Heart left ventricle (tissue), 16 donors: ENCODE measurements at regions of chr6 and their contacts with region 1.

Region 1: GRCh38 chr6:133512410-133513016 is 271.4 kb downstream of the EYA4 start:
- DNase-seq: peak in 2 of 5 donors; percentile 33 to 35
- ATAC-seq: no peak
- H3K4me3 ChIP-seq: no peak overlapping the region
- H3K27ac ChIP-seq: no peak overlapping the region
- H3K4me1 ChIP-seq: no peaks in the 10 kb centered on the region
- H3K27me3 ChIP-seq: peaks cover 0 to 2% (median 0%) of the 10 kb centered on the region in 9 donors
- CTCF ChIP-seq: peak; percentile 17 to 70 (median 58)
- POLR2A ChIP-seq: no peak

Region 2: DNA sequence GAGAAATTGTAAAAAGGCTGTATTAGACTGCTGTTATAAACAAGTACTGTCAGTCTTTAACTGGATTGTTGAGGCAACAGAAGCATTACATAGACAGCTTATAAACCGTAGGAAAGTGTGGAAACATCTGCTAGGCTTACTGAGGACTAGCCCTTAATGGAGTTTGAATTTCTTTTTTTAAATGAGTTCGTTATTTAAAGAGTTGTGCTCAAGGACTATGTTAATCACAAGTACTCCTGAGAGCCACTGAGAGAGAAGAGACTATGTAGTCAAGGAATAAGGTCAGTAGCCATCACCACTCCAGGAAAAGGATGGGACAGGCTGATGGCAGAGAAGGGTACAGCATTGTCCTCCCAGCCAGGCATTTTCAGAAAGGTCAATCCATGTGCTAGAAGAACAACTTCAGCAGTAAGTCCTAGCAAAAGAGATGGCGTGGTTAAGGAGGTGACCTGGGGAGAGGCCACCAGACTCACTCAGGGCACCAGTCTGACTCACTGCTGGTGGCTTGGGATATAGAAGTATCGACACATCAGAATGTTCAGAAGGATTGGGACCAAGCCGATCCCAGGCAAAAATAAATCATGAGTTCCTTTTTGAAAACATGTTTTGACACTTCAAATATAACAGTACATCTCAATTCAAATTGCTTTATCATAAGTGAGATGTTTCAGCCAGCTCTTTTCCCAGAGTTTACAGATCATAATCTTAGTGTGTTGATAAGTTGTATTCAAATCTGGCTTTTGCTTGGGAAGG is 691.7 kb before region 1 on chr6:
- intact Hi-C with region 1: loop called in 2 of 10 experiments (anchors 10 kb)
- DNase-seq: no peak
- ATAC-seq: peak in 2 of 4 donors; percentile 35 to 54
- H3K4me3 ChIP-seq: no peak overlapping the region
- H3K27ac ChIP-seq: peak overlapping the region in 2 of 12 donors; percentile 10 to 40
- H3K4me1 ChIP-seq: peaks cover 0 to 28% (median 18%) of the 10 kb centered on the region in 12 donors
- H3K27me3 ChIP-seq: no peaks in the 10 kb centered on the region
- CTCF ChIP-seq: no peak
- POLR2A ChIP-seq: no peak

Region 3: GRCh38 chr6:132830334-132830751 is 682.2 kb before region 1 on chr6:
- intact Hi-C with region 1: loop called in 4 of 10 experiments (anchors 2 to 10 kb)
- DNase-seq: no peak
- ATAC-seq: no peak
- H3K4me3 ChIP-seq: no peak overlapping the region
- H3K27ac ChIP-seq: no peak overlapping the region
- H3K4me1 ChIP-seq: no peaks in the 10 kb centered on the region
- H3K27me3 ChIP-seq: no peaks in the 10 kb centered on the region
- CTCF ChIP-seq: peak in 10 of 12 donors; percentile 20 to 59 (median 48)
- POLR2A ChIP-seq: no peak

Region 4: DNA sequence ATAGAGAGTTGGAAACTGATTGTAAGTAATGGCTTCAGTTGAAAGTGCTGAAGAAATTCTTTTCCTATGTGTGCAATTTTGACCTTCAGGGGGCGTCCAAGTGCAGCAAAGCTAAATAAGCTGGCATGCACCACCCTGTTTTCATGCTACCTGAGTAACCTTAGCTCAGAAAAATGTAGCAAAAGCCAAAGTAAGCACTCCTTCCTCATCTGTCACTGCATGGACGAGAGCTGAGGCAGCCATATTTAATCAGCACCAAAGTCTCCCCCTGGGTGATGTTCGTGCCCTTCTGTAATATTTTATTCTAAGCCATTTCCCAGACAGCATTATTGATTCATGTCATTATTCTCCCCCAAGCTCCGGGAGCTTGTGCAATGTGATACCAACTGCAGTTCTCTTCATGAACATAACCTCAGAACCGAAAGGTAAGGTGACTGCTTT is 575.0 kb before region 1 on chr6:
- intact Hi-C with region 1: loop called in 3 of 10 experiments (anchors 10 kb)
- DNase-seq: peak in 2 of 5 donors; percentile 22 to 36
- ATAC-seq: peak in 1 of 4 donors; percentile 16
- H3K4me3 ChIP-seq: no peak overlapping the region
- H3K27ac ChIP-seq: no peak overlapping the region
- H3K4me1 ChIP-seq: no peaks in the 10 kb centered on the region
- H3K27me3 ChIP-seq: peaks cover 0 to 4% (median 0%) of the 10 kb centered on the region in 9 donors
- CTCF ChIP-seq: peak in 11 of 12 donors; percentile 15 to 55 (median 40)
- POLR2A ChIP-seq: no peak

Region 5: DNA sequence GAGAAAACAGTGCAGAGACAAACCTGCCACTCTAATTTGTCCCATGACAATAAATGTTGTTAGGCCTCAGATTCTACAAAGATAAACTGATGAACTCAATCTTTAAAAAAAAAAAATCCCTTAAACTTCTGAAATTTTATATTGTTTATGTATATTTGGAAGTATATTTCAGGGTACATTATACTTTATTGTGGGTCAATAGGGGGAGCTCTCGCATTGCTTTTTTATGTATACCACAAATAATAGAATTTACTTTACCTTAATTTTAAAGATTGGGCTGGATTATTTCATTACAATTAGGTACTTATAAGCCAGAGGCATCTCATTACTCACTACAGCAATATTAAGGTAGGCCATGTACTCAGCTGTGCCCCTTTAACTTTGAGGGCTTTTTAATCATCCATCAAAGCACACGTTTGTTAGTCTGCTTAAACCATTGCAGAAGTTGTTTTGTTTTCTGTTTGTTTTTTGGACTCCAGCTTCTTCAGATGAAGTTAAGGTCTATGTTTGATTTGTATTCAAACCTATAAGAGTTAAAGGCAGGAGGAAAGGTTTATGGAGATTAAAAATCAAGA is 327.6 kb before region 1 on chr6:
- intact Hi-C with region 1: loop called (anchors 5 to 10 kb)
- DNase-seq: no peak
- ATAC-seq: no peak
- H3K4me3 ChIP-seq: no peak overlapping the region
- H3K27ac ChIP-seq: no peak overlapping the region
- H3K4me1 ChIP-seq: no peaks in the 10 kb centered on the region
- H3K27me3 ChIP-seq: no peaks in the 10 kb centered on the region
- CTCF ChIP-seq: peak; percentile 25 to 67 (median 52)
- POLR2A ChIP-seq: no peak

Region 6: GRCh38 chr6:133191323-133191722 is 321.2 kb before region 1 on chr6:
- intact Hi-C with region 1: loop called in 7 of 10 experiments (anchors 5 to 10 kb)
- DNase-seq: no peak
- ATAC-seq: no peak
- H3K4me3 ChIP-seq: no peak overlapping the region
- H3K27ac ChIP-seq: no peak overlapping the region
- H3K4me1 ChIP-seq: peaks cover 0 to 6% (median 0%) of the 10 kb centered on the region in 12 donors
- H3K27me3 ChIP-seq: no peaks in the 10 kb centered on the region
- CTCF ChIP-seq: no peak
- POLR2A ChIP-seq: no peak

Region 7: GRCh38 chr6:133241086-133241900 is 271.2 kb before region 1 on chr6 and contains the start of gene EYA4:
- intact Hi-C with region 1: loop called in 1 of 10 experiments (anchors 5 kb)
- DNase-seq: peak; percentile 23 to 73 (median 50)
- ATAC-seq: peak; percentile 56 to 75 (median 70)
- H3K4me3 ChIP-seq: peak within 1 kb of the TSS; percentile 38 to 73 (median 62)
- H3K27ac ChIP-seq: peak within 1 kb of the TSS; percentile 80 to 93 (median 82)
- H3K4me1 ChIP-seq: peaks cover 0 to 22% (median 0%) of the 10 kb centered on the region in 12 donors
- H3K27me3 ChIP-seq: peaks cover 0 to 66% (median 15%) of the 10 kb centered on the region in 9 donors
- CTCF ChIP-seq: no peak
- POLR2A ChIP-seq: no peak
- total RNA-seq, gene EYA4: 14.6 to 29.6 (median 22.6) TPM